PC-3 (cell line): ENCODE measurements at regions of chr17 and their contacts with region 1.

Region 1: GRCh38 chr17:80832888-80833583 is 158.6 kb upstream of the CHMP6 start:
- DNase-seq: peak; percentile 96
- ATAC-seq: peak; percentile 98
- H3K4me3 ChIP-seq: peak overlapping the region; percentile 67
- H3K27ac ChIP-seq: peak overlapping the region; percentile 97
- H3K4me1 ChIP-seq: peaks cover 30% of the 10 kb centered on the region
- H3K27me3 ChIP-seq: no peaks in the 10 kb centered on the region
- CTCF ChIP-seq: no peak

Region 2: DNA sequence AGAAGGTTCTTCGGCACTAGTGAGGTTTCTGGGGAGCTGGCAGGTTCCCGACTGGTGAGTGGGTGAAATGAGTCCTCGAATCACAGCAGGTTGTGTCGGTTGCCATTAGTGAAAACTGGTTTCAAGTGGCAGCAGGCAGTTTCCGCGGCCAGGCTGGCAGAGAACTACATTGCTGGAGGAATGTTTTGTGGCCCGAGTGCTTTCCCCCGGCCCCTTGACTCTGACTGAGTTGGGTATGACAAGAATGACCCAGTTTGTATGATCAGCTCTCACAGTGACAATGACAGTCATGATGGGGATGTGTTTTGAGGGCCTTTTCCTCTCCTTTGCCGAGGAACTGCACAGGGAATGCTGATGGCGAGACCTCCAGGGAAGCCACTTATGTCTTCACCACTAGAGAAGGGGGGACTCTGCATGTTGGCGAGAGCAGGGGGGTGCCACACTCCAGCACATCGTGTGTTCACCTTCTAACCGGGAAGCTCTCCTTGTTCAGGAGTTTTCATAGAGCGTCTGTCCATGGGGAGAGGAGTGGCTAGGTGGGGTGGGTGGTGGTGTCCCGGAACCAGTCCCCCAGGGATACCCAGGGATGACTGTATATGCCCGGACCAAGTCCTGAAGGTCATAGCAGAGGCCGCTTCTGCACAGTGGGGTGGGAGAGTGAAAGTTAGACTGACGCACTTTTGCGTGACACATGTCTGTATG is 47.4 kb before region 1 on chr17:
- CTCF ChIA-PET with region 1: no interaction called
- POLR2A ChIA-PET with region 1: no interaction called
- intact Hi-C with region 1: no loop called
- DNase-seq: no peak
- ATAC-seq: no peak
- H3K4me3 ChIP-seq: no peak overlapping the region
- H3K27ac ChIP-seq: no peak overlapping the region
- H3K4me1 ChIP-seq: peaks cover 31% of the 10 kb centered on the region
- H3K27me3 ChIP-seq: no peaks in the 10 kb centered on the region
- CTCF ChIP-seq: no peak

Region 3: GRCh38 chr17:80855948-80856862 is 23.2 kb after region 1 on chr17:
- CTCF ChIA-PET with region 1: no interaction called
- POLR2A ChIA-PET with region 1: no interaction called
- intact Hi-C with region 1: loop called (anchors 1 kb)
- DNase-seq: peak; percentile 98
- ATAC-seq: peak; percentile 93
- H3K4me3 ChIP-seq: peak overlapping the region; percentile 35
- H3K27ac ChIP-seq: peak overlapping the region; percentile 100
- H3K4me1 ChIP-seq: peaks cover 45% of the 10 kb centered on the region
- H3K27me3 ChIP-seq: no peaks in the 10 kb centered on the region
- CTCF ChIP-seq: no peak